ENCODE measurements at regions of chr1 and their contacts with region 1.

Region 1: DNA sequence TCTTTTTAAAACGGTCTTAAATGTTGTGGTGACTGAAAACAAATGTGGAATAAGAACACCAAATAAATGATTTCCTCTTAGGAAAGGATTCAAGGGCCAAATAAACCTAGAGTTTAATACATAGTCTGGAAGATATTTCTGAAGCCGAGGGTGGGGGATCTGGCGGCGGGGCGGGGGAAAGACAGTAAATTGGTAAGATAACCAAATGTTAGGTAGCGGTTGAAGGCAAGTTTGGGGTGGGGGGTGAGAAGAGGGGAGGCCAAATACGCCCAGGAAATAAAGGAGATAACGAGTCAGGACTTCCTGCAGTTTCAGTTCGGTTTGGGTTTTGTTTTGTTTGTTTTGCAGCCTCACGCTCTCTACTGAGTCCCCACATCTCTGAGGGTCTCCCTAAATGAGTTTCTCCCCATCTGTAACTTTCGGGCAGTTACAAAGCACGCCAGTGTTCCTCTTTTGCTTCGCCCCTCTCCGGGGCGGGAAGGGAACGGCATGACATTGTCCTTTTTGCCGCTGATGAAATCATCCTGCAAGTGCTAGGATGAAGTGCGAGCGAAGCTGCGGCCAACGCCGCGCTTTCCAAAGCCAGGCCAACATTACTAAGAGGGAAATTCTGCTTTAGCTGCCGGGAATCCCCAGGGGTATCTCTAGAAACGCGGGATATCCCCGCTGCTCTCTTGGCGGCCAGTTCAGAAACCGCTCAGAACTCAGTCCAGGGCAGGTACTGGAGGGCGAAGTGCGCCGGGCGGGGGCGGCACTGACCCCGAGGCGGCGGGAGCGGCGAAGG is 844 bp downstream of the NIBAN1 start:
- DNase-seq: no peak
- H3K4me3 Mint-ChIP-seq: peak overlapping the region; percentile 90
- H3K27ac Mint-ChIP-seq: peak overlapping the region; percentile 95
- H3K4me1 Mint-ChIP-seq: peaks cover 67% of the 10 kb centered on the region
- H3K27me3 Mint-ChIP-seq: peaks cover 15% of the 10 kb centered on the region

Region 2: DNA sequence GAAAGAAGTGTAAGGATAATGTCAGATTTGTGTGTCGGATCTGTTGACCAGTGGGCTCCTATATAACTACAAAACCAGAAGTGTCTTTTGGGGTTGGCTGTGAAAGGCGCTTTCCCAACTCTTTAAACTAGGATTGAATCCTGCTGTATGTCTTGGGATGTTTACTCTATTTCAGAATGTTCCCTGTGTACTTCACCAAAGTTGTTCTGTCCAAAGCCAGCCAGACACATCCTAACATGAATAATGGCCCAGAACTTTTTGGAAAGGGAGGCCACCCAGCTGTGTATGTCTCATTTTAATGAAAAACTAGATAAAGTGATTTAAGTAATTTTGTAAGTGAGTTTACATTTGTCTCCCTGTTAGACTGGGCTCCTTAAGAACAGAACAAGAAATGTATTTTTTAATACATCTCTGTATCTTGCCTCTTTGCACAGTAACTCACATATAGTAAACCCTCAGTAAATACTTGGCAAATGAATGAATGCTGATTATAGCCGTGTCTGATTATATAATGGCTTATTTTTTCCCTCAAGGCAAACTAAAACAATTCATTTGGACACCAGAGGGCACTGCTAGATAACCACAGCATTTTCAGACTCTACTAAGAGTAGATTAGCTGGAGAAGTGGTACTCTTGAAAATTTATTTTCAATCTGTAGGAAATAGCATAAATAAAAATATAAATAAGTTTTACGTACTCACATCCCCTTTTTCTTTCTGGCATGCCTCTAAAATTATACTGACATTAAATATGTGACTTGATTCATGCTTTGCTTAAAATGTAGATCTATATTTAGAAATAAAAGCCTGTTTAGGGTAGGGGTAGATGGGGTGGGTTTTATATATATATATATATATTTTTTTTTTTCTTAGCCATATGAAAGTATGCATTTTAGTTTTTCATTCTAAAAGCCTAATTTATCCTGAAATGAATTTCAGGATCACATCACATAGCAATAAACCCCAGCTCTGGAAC is 898.1 kb before region 1 on chr1:
- intact Hi-C with region 1: loop called (anchors 10 kb)
- DNase-seq: no peak
- H3K4me3 Mint-ChIP-seq: no peak overlapping the region
- H3K27ac Mint-ChIP-seq: no peak overlapping the region
- H3K4me1 Mint-ChIP-seq: peaks cover 19% of the 10 kb centered on the region
- H3K27me3 Mint-ChIP-seq: no peaks in the 10 kb centered on the region

Region 3: GRCh38 chr1:184866991-184867788 is 106.3 kb before region 1 on chr1:
- intact Hi-C with region 1: loop called (anchors 1 kb)
- DNase-seq: peak; percentile 44
- H3K4me3 Mint-ChIP-seq: peak overlapping the region; percentile 38
- H3K27ac Mint-ChIP-seq: peak overlapping the region; percentile 90
- H3K4me1 Mint-ChIP-seq: peaks cover 40% of the 10 kb centered on the region
- H3K27me3 Mint-ChIP-seq: no peaks in the 10 kb centered on the region

Region 4: DNA sequence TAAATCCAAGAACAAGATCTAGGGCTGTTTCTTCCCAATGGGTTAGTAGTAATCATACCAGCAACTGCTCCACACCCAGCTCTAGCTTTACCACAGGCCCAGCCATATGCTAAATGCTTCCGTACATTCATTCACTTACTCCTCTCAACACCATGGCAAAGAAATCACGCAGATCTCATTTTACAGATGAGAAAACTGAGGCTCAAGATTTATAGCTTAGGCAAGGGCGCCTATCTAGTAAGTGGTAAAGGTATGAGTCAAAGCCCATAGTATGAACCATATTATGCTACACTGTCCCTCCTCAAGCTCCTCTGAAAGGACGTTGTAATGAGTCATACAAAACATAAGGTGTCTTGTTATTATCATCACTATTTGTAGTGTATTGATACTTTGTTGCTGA is 81.3 kb before region 1 on chr1:
- intact Hi-C with region 1: loop called (anchors 1 kb)
- DNase-seq: no peak
- H3K4me3 Mint-ChIP-seq: no peak overlapping the region
- H3K27ac Mint-ChIP-seq: peak overlapping the region; percentile 61
- H3K4me1 Mint-ChIP-seq: peaks cover 39% of the 10 kb centered on the region
- H3K27me3 Mint-ChIP-seq: no peaks in the 10 kb centered on the region

Region 5: DNA sequence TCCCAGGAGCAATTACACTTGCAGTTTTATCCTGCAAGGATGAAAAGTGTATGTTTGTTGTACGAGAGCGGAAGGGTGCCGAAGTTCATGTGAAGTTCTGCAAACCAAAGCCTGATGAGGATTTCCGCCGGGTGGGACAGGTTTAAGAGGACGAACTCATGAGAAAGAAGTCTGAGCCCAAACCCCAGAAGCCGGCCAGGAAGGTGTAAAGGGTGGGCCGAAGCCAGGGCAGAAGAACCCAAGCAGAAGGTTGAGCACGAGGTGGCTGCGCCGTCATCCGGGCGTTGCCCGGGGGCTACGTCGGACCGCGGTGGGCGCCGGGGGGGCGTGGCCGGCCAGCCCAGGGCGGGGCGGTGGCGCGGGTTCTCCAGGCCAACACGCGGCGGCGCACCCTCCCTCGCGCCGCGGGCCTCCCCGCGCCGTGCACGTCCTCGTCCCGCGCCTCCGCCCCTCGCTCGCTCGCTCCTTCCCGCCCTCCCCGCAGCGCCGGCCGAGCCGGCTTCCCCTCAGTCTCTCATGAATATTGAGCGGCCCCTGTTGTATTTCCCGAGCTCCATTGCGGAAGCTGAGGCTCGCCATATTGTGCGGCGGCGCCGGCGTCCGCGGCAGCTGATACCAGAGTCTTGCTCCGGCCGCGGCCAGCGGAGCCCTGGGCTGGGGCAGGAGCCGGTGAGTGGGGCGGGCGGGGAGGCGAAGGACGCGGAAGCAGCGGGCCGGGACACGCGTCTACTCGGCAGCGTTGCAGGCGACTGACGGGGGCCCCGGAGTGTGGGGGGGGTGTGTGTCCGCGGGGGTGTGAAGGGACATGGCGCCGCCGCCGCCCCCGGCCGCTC is 71.7 kb after region 1 on chr1 and contains the start of gene RNF2:
- intact Hi-C with region 1: loop called (anchors 2 kb)
- DNase-seq: peak; percentile 65
- H3K4me3 Mint-ChIP-seq: peak within 1 kb of the TSS; percentile 89
- H3K27ac Mint-ChIP-seq: peak within 1 kb of the TSS; percentile 82
- H3K4me1 Mint-ChIP-seq: peaks cover 29% of the 10 kb centered on the region
- H3K27me3 Mint-ChIP-seq: peaks cover 15% of the 10 kb centered on the region
- total RNA-seq, gene RNF2: 24.1 and 24.4 TPM in 2 replicates

Measured in activated T-helper 1 cell treated with anti-CD3 and anti-CD28 coated beads, Interleukin-12 subunit alpha, Interleukin-12 subunit beta, Interleukin-2, Interleukin-4 antibody, amounts not matched to agents 30 ng/mL and 10 ng/mL and 1 ng/mL, durations not matched to agents 14 hours and 24 hours and 36 hours (primary cell).